Activated CD8-positive, alpha-beta T cell treated with anti-CD3 and anti-CD28 coated beads, Interleukin-2, amount 10 ng/mL, durations not matched to agents 7 days and 5 days (primary cell): ENCODE measurements at regions of chr20 and their contacts with region 1.

Region 1: GRCh38 chr20:50070991-50071888 is 41.7 kb downstream of the UBE2V1 start:
- DNase-seq: peak; percentile 93
- ATAC-seq: peak; percentile 100
- H3K4me3 Mint-ChIP-seq: peak overlapping the region; percentile 39
- H3K27ac Mint-ChIP-seq: no peak overlapping the region
- H3K4me1 Mint-ChIP-seq: peaks cover 8% of the 10 kb centered on the region
- H3K27me3 Mint-ChIP-seq: peaks cover 2% of the 10 kb centered on the region

Region 2: DNA sequence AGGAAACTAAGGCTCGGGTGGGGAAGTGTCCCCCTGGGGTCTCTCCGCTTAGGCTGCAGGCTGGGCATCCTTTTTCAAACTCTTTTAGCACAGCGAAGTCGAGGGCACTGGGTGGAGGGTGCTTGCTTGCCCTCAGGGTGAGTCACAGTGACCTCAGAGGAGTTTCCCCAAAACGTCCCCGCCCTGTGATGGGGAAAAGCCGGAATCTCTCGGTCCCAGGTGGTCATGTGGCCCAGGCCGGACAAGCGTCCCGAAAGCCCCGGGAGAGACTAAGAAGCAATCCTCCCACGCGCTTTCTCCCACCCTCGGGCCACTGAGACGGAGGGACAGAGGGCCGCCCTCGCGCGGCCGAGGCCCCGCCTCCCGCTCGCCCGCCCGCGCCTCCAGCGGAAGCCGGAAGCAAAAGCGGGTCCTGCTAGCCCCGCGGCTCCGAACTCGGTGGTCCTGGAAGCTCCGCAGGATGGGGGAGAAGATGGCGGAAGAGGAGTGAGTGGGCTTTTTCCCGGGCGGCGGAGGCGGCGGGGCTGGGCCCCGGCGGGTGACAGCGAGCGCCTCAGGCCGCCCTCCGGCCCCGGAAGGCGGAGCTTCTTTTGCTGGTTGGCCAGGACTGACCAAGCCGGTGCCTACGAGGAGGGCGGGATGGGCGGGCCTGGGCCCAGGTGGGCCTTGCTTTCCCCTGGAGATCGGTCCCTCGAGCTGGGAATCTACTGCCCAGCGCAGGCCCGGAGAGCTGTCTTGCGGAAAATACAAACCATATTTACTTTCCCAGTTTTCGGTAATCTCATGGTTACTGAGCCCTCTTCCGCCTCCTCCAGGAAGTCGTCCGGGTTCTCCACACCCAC is 258.6 kb before region 1 on chr20 and contains the start of gene SLC9A8:
- CTCF ChIA-PET with region 1: no interaction called
- POLR2A ChIA-PET with region 1: no interaction called
- DNase-seq: peak; percentile 87
- ATAC-seq: peak; percentile 95
- H3K4me3 Mint-ChIP-seq: peak within 1 kb of the TSS; percentile 97
- H3K27ac Mint-ChIP-seq: peak within 1 kb of the TSS; percentile 95
- H3K4me1 Mint-ChIP-seq: peaks cover 34% of the 10 kb centered on the region
- H3K27me3 Mint-ChIP-seq: no peaks in the 10 kb centered on the region
- total RNA-seq, gene SLC9A8: 19.4 to 20.5 TPM

Region 3: GRCh38 chr20:49964964-49965780 is 106.1 kb before region 1 on chr20:
- CTCF ChIA-PET with region 1: interaction called, 12 read pairs
- POLR2A ChIA-PET with region 1: no interaction called
- DNase-seq: peak; percentile 34
- ATAC-seq: peak; percentile 58
- H3K4me3 Mint-ChIP-seq: no peak overlapping the region
- H3K27ac Mint-ChIP-seq: no peak overlapping the region
- H3K4me1 Mint-ChIP-seq: no peaks in the 10 kb centered on the region
- H3K27me3 Mint-ChIP-seq: no peaks in the 10 kb centered on the region

Region 4: DNA sequence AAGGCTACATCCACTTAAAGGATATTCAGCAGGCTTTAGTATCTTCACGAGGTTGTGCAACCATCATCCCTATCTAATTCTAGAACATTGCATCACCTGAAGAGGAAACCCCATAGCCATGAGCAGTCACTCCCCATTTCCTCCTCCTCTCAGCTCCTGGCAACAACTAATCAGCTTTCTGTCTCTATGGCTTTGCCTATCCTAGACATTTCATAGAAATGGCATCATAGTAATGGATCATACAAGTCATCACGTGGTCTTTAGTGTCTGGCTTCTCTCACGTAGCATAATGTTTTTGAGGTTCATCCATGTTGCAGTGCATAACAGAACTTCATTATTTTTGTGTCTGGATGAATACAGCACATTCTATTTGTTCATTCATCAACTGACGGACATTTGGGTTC is 68.0 kb before region 1 on chr20:
- CTCF ChIA-PET with region 1: interaction called, 21 read pairs
- POLR2A ChIA-PET with region 1: no interaction called
- DNase-seq: no peak
- ATAC-seq: peak; percentile 57
- H3K4me3 Mint-ChIP-seq: no peak overlapping the region
- H3K27ac Mint-ChIP-seq: peak overlapping the region; percentile 6
- H3K4me1 Mint-ChIP-seq: peaks cover 43% of the 10 kb centered on the region
- H3K27me3 Mint-ChIP-seq: peaks cover 11% of the 10 kb centered on the region

Region 5: DNA sequence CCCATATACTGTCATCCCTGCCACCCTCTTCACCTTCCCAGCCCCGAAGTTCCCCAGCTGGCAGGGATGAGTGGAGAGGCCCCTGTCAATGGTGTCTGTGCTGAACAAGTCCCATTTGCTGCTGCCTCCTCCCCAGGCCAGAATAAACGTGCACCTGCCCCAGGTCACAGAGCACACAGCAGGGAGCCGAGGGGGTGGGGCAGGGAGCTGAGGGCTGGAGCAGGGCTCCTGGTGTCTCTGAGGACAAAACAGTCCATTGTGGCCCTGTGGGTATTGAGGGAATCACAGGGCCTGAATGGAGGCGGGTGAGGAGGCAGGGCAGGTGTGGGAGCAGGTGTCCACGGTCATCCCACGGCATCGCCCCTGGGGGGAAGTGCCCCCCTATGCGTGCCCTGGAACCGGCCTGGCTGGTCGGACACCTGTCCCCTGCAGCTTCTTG is 32.6 kb before region 1 on chr20:
- CTCF ChIA-PET with region 1: interaction called, 10 read pairs
- POLR2A ChIA-PET with region 1: no interaction called
- DNase-seq: no peak
- ATAC-seq: no peak
- H3K4me3 Mint-ChIP-seq: no peak overlapping the region
- H3K27ac Mint-ChIP-seq: no peak overlapping the region
- H3K4me1 Mint-ChIP-seq: no peaks in the 10 kb centered on the region
- H3K27me3 Mint-ChIP-seq: no peaks in the 10 kb centered on the region

Region 6: GRCh38 chr20:50110141-50110925 is 39.1 kb after region 1 on chr20:
- CTCF ChIA-PET with region 1: interaction called, 18 read pairs
- POLR2A ChIA-PET with region 1: interaction called, 3 read pairs
- DNase-seq: peak; percentile 83
- ATAC-seq: peak; percentile 57
- H3K4me3 Mint-ChIP-seq: peak overlapping the region; percentile 97
- H3K27ac Mint-ChIP-seq: peak overlapping the region; percentile 96
- H3K4me1 Mint-ChIP-seq: peaks cover 82% of the 10 kb centered on the region
- H3K27me3 Mint-ChIP-seq: no peaks in the 10 kb centered on the region

Region 7: DNA sequence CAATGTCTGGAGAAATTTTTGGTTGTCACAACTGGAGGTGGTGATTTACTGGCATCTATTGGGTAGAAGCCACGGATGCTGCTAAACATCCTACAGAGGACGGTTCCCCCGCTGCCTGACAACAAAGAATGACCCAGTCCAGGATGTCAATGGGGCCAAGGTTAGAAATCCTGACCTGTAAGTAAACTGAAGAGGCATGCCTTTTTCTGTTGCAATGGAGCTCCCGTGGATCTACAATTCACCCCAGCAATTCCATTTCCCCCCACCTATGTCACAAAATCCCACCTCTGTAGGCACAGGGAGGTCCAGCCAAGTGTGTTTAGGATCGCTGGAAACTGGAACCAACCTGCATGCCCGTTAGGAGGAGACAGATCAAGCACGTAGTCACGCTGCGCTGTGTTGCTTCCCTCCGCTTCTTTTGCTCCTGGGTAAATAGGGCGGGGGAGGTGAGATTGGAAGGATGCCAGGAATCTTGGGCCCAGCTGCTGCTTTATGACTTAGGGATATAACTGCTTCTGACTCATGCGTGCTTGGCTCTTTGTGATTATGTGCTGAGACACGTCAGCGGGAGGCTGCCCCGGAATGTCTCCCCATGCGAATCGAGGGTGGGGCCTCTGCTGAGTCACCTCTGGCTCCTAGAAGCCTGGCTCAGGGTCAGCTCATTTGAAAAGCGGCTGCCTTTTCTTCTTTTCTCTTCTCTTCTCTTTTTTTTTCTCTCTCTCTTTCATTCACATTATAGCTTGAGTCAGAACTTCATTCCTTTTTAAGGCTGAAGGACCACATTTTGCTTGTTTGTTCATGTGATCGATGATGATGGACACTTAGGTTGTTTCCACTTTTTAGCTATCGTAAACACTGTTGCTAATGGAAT is 94.7 kb after region 1 on chr20:
- CTCF ChIA-PET with region 1: interaction called, 12 read pairs
- POLR2A ChIA-PET with region 1: no interaction called
- DNase-seq: peak; percentile 79
- ATAC-seq: peak; percentile 95
- H3K4me3 Mint-ChIP-seq: peak overlapping the region; percentile 69
- H3K27ac Mint-ChIP-seq: peak overlapping the region; percentile 80
- H3K4me1 Mint-ChIP-seq: peaks cover 14% of the 10 kb centered on the region
- H3K27me3 Mint-ChIP-seq: peaks cover 2% of the 10 kb centered on the region